CD4-positive, alpha-beta memory T cell (primary cell): ENCODE measurements at regions of chr3 and their contacts with region 1.

Region 1: GRCh38 chr3:49093853-49094767 is at the start of gene QRICH1:
- DNase-seq: peak; percentile 97 to 99 (median 98)
- H3K4me3 ChIP-seq: peak within 1 kb of the TSS; percentile 84 to 90
- H3K4me3 Mint-ChIP-seq: peak within 1 kb of the TSS; percentile 92 to 96 (median 96)
- H3K27ac ChIP-seq: peak within 1 kb of the TSS; percentile 87
- H3K27ac Mint-ChIP-seq: peak within 1 kb of the TSS; percentile 94 to 99 (median 97)
- H3K4me1 ChIP-seq: peaks cover 46% of the 10 kb centered on the region
- H3K4me1 Mint-ChIP-seq: peaks cover 21 to 49% (median 35%) of the 10 kb centered on the region in 4 donors
- H3K27me3 ChIP-seq: no peaks in the 10 kb centered on the region
- H3K27me3 Mint-ChIP-seq: no peaks in the 10 kb centered on the region
- total RNA-seq, gene QRICH1: 172 to 177 TPM

Region 2: GRCh38 chr3:48898383-48899234 is 195.5 kb before region 1 on chr3 and contains the start of gene SLC25A20:
- CTCF ChIA-PET with region 1: no interaction called
- POLR2A ChIA-PET with region 1: interaction called, 10 read pairs
- intact Hi-C with region 1: no loop called
- DNase-seq: peak; percentile 85 to 89 (median 86)
- H3K4me3 ChIP-seq: peak within 1 kb of the TSS; percentile 76 to 98
- H3K4me3 Mint-ChIP-seq: peak within 1 kb of the TSS; percentile 91 to 97 (median 96)
- H3K27ac ChIP-seq: peak within 1 kb of the TSS; percentile 76
- H3K27ac Mint-ChIP-seq: peak within 1 kb of the TSS; percentile 71 to 97 (median 96)
- H3K4me1 ChIP-seq: peaks cover 39% of the 10 kb centered on the region
- H3K4me1 Mint-ChIP-seq: peaks cover 23 to 61% (median 39%) of the 10 kb centered on the region in 4 donors
- H3K27me3 ChIP-seq: no peaks in the 10 kb centered on the region
- H3K27me3 Mint-ChIP-seq: no peaks in the 10 kb centered on the region
- total RNA-seq, gene SLC25A20: 12.7 to 19.2 TPM

Region 3: GRCh38 chr3:49021813-49022687 is 72.1 kb before region 1 on chr3 and contains the start of gene NDUFAF3:
- CTCF ChIA-PET with region 1: interaction called, 18 read pairs
- POLR2A ChIA-PET with region 1: interaction called, 96 read pairs
- intact Hi-C with region 1: loop called (anchors 2 kb)
- DNase-seq: peak; percentile 89 to 91 (median 90)
- H3K4me3 ChIP-seq: peak within 1 kb of the TSS; percentile 65 to 98
- H3K4me3 Mint-ChIP-seq: peak within 1 kb of the TSS; percentile 94 to 98 (median 96)
- H3K27ac ChIP-seq: peak within 1 kb of the TSS; percentile 97
- H3K27ac Mint-ChIP-seq: peak within 1 kb of the TSS; percentile 93 to 99 (median 98)
- H3K4me1 ChIP-seq: peaks cover 43% of the 10 kb centered on the region
- H3K4me1 Mint-ChIP-seq: peaks cover 16 to 74% (median 41%) of the 10 kb centered on the region in 4 donors
- H3K27me3 ChIP-seq: no peaks in the 10 kb centered on the region
- H3K27me3 Mint-ChIP-seq: no peaks in the 10 kb centered on the region
- total RNA-seq, gene NDUFAF3: 77.9 to 85.7 TPM

Region 4: DNA sequence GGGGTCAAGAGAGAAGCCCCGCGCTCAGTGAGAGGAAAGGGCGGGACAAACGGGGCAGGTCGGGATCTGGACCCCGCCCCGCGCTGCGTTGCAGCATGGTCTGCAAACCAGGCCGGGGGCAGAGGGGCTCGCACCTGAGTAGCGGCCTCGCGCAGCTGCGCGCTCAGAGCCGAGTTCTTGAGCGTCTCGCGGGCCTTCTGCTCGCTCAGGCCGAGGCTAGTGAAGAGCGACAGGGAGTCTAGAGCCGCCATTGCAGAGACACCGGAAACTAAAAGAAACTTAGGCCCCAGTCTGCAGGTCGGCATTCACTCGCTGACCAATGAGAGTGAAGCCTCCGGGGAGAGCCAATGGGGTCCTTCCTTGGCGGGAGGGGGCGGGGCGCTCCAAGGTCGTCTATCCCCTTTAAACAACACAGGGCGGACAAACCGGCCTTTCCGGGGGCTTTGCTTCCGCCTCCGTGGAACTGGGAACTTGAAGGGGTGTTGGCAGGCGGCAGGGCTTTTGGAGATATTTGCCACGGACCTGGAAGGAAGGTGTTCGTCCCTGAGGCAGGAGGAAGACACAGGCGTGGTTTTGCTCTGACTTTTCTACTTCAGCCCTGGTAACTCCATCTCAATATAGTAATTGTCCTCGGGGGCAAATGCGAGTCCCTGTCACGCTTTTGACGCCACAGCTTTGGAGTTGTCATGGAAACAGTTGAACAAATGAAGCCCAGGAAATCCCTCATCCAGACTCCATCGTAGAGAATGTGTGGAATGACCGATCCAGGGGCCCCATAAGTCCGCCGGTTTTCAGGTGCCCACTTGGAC is 10.6 kb after region 1 on chr3 and contains the start of gene QARS1:
- CTCF ChIA-PET with region 1: interaction called, 17 read pairs
- POLR2A ChIA-PET with region 1: interaction called, 122 read pairs
- intact Hi-C with region 1: loop called (anchors 1 kb)
- DNase-seq: peak; percentile 86 to 93 (median 88)
- H3K4me3 ChIP-seq: peak within 1 kb of the TSS; percentile 64 to 94
- H3K4me3 Mint-ChIP-seq: peak within 1 kb of the TSS; percentile 96 to 99 (median 98)
- H3K27ac ChIP-seq: peak within 1 kb of the TSS; percentile 92
- H3K27ac Mint-ChIP-seq: peak within 1 kb of the TSS; percentile 94 to 99 (median 98)
- H3K4me1 ChIP-seq: peaks cover 21% of the 10 kb centered on the region
- H3K4me1 Mint-ChIP-seq: peaks cover 12 to 38% (median 26%) of the 10 kb centered on the region in 4 donors
- H3K27me3 ChIP-seq: no peaks in the 10 kb centered on the region
- H3K27me3 Mint-ChIP-seq: no peaks in the 10 kb centered on the region
- total RNA-seq, gene QARS1: 199 TPM

Region 5: DNA sequence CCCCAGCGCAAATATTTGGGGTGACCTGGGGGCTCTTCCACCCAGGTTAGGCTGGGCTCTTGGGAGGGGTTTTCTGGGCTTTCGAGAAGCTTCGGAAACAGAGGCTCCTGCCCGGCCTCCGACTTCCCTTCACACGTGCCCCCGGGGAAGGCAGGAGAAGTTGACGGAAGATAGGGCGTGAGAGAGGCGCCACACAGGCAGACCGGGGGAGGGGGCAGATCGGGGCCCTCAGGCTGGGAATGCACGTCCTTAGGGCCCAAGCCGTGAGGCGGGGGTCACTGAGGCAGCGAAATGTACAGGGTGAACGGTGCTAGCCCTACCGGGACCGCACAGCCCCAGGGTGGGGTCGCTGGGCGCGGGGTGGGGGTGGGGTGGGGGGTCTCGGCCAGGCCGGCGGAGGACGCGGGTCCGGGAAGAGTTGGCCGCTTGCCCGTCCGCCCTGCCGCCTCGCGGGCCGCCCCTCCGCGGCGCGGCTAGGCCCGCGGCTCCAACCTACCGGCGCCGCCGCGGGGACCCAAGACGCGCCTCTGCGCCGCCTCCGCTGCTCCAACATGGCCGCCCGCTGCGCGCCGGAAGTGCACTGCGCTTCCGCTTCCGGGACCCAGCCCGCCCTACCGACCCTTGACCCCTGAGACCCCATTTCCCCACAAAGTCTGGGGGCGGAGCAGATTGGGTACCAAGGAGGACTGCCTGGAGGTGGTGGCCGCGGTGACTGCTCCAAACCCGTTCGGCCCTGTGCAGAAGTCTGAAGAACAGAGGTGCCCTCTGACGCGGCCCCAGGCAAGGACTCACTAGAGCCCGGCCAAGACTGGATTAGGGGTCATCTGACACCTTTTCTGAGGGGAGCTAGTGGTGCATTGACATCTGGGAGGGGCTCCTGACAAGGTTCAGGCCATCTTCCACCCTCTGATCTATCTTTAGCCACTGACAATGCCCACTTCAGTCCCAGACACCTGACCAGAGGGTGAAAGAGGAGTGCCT is 72.0 kb after region 1 on chr3 and contains the start of gene CCDC71:
- CTCF ChIA-PET with region 1: interaction called, 3 read pairs
- POLR2A ChIA-PET with region 1: interaction called, 13 read pairs
- intact Hi-C with region 1: loop called (anchors 2 kb)
- DNase-seq: peak; percentile 70 to 77 (median 72)
- H3K4me3 ChIP-seq: peak within 1 kb of the TSS; percentile 49 to 93
- H3K4me3 Mint-ChIP-seq: peak within 1 kb of the TSS; percentile 90 to 96 (median 91)
- H3K27ac ChIP-seq: peak within 1 kb of the TSS; percentile 57
- H3K27ac Mint-ChIP-seq: peak within 1 kb of the TSS; percentile 92 to 96 (median 94)
- H3K4me1 ChIP-seq: peaks cover 31% of the 10 kb centered on the region
- H3K4me1 Mint-ChIP-seq: peaks cover 19 to 52% (median 30%) of the 10 kb centered on the region in 4 donors
- H3K27me3 ChIP-seq: no peaks in the 10 kb centered on the region
- H3K27me3 Mint-ChIP-seq: no peaks in the 10 kb centered on the region
- total RNA-seq, gene CCDC71: 31.6 to 33.5 TPM

Region 6: DNA sequence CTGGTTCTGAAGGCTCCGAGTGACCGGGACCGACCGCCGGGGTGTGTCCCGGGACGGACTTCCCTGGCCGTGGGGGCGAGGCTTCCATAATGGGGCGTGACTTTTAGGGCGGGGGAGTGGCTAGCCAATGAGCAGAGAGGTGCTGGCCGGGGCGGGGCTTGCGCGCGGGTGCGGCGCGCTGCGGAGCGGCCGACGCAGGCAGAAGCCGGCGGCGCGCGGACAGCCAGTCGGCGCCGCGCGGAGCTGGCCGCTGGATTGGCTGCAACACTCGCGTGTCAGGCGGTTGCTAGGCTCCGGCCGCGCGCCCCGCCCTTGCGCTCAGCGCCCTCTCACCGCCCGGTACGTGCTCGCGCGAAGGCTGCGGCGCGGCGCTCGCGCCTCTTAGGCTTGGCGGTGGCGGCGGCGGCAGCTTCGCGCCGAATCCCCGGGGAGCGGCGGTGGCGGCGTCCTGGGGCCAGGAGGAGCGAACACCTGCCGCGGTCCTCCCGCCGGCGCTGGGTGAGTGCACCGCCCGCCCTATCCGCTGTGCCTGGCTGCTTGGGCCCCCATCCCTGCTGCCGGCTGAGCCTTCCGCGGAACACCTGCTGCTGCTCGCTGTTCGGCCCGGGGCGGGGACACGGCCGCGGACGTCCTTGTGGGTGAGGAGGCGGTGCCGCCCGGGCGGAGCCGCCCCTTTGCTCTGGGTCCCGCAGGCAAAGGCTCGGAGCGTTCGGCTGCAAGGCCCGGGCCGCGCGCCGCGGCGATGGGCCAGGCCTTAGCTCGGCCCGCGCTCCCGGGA is 376.0 kb after region 1 on chr3 and contains the start of gene DAG1:
- CTCF ChIA-PET with region 1: no interaction called
- POLR2A ChIA-PET with region 1: interaction called, 18 read pairs
- intact Hi-C with region 1: loop called (anchors 1 kb)
- DNase-seq: peak; percentile 93 to 96 (median 95)
- H3K4me3 ChIP-seq: peak within 1 kb of the TSS; percentile 71 to 89
- H3K4me3 Mint-ChIP-seq: peak within 1 kb of the TSS; percentile 89 to 93 (median 91)
- H3K27ac ChIP-seq: peak within 1 kb of the TSS; percentile 87
- H3K27ac Mint-ChIP-seq: peak within 1 kb of the TSS; percentile 90 to 96 (median 95)
- H3K4me1 ChIP-seq: peaks cover 26% of the 10 kb centered on the region
- H3K4me1 Mint-ChIP-seq: peaks cover 15 to 28% (median 19%) of the 10 kb centered on the region in 4 donors
- H3K27me3 ChIP-seq: no peaks in the 10 kb centered on the region
- H3K27me3 Mint-ChIP-seq: no peaks in the 10 kb centered on the region
- total RNA-seq, gene DAG1: 15.3 to 18.0 TPM